GM12878 (cell line): ENCODE measurements at regions of chr10 and their contacts with region 1.

Region 1: DNA sequence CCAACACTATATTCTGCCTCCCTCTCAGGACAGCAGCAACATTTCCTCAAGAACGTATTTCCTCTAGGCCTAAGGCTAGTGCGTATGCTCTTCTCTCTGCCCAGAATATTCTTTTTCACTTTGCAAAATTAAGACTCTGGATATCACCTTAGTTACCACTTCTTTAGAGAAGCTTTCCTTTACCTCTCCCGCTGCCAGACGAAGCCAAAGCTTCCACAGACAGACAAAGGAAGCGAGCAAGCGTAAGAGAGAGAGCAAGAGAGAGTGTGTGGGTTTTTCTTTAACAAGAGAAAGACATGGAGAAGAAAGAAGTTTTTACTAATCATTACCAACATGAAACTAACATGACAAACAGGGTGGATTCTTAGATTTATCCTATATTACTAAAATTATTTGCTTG is 64.1 kb downstream of the P4HA1 start:
- DNase-seq: no peak
- ATAC-seq: no peak
- H3K4me3 ChIP-seq: no peak overlapping the region
- H3K27ac ChIP-seq: no peak overlapping the region
- H3K4me1 ChIP-seq: no peaks in the 10 kb centered on the region
- H3K27me3 ChIP-seq: no peaks in the 10 kb centered on the region
- CTCF ChIP-seq: no peak
- EP300 ChIP-seq: no peak
- POLR2A ChIP-seq: no peak
- RAD21 ChIP-seq: no peak

Region 2: GRCh38 chr10:72753760-72754231 is 278.7 kb before region 1 on chr10:
- CTCF ChIA-PET with region 1: no interaction called
- POLR2A ChIA-PET with region 1: no interaction called
- RAD21 ChIA-PET with region 1: no interaction called
- SMC1A ChIA-PET with region 1: no interaction called
- in situ Hi-C with region 1: no loop called
- intact Hi-C with region 1: no loop called
- DNase-seq: no peak
- ATAC-seq: no peak; the same call in 2 of the 3 replicates
- H3K4me3 ChIP-seq: no peak overlapping the region
- H3K27ac ChIP-seq: no peak overlapping the region
- H3K4me1 ChIP-seq: peaks cover 4% of the 10 kb centered on the region
- H3K27me3 ChIP-seq: no peaks in the 10 kb centered on the region
- CTCF ChIP-seq: no peak
- EP300 ChIP-seq: no peak
- POLR2A ChIP-seq: no peak
- RAD21 ChIP-seq: no peak

Region 3: DNA sequence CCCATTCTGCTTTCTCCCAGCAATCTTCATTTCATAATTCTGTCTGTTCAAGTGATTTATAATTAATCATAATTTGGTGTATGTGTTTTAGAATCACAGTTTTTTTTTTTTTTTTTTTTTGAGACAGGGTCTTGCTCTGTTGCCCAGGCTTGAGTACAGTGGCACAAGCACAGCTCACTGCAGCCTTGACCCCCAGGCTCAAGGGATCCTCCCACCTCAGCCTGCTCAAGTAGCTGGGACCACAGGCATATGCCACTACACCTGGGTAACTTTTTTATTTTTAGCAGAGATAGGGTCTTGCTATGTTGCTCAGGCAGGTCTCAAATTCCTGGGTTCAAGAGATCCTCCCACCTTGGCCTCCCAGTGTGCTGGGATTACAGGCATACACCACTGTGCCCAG is 28.7 kb before region 1 on chr10:
- CTCF ChIA-PET with region 1: no interaction called
- POLR2A ChIA-PET with region 1: no interaction called
- RAD21 ChIA-PET with region 1: no interaction called
- SMC1A ChIA-PET with region 1: no interaction called
- in situ Hi-C with region 1: no loop called
- intact Hi-C with region 1: no loop called
- DNase-seq: no peak
- ATAC-seq: no peak
- H3K4me3 ChIP-seq: no peak overlapping the region
- H3K27ac ChIP-seq: no peak overlapping the region
- H3K4me1 ChIP-seq: no peaks in the 10 kb centered on the region
- H3K27me3 ChIP-seq: no peaks in the 10 kb centered on the region
- CTCF ChIP-seq: no peak
- EP300 ChIP-seq: no peak
- POLR2A ChIP-seq: no peak
- RAD21 ChIP-seq: no peak

Region 4: GRCh38 chr10:73021050-73021449 is 11.5 kb before region 1 on chr10:
- CTCF ChIA-PET with region 1: no interaction called
- POLR2A ChIA-PET with region 1: no interaction called
- RAD21 ChIA-PET with region 1: no interaction called
- SMC1A ChIA-PET with region 1: no interaction called
- in situ Hi-C with region 1: no loop called
- intact Hi-C with region 1: no loop called
- DNase-seq: no peak
- ATAC-seq: no peak
- H3K4me3 ChIP-seq: no peak overlapping the region
- H3K27ac ChIP-seq: no peak overlapping the region
- H3K4me1 ChIP-seq: no peaks in the 10 kb centered on the region
- H3K27me3 ChIP-seq: no peaks in the 10 kb centered on the region
- CTCF ChIP-seq: no peak
- EP300 ChIP-seq: no peak
- POLR2A ChIP-seq: no peak
- RAD21 ChIP-seq: no peak

Region 5: DNA sequence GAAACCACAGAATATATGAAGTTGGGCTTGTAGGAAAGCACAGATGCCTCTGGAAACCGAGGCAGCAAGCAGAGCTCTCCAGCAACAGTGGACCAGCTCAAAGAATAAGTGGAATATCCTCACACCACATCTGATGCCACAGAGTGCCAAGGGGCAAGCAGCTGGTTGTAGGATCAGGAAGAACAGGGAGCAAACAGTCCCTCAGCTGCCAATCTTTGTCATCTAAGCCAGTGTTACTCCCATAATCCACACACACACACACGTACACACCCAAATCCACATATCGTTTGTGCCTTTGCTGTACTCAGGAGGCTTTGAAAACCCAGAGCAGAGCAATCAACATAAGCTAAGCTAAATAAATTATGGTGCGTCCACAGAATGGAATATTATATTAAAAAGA is 691.0 kb after region 1 on chr10:
- CTCF ChIA-PET with region 1: no interaction called
- POLR2A ChIA-PET with region 1: interaction called, 12 read pairs
- RAD21 ChIA-PET with region 1: no interaction called
- SMC1A ChIA-PET with region 1: no interaction called
- in situ Hi-C with region 1: no loop called
- intact Hi-C with region 1: no loop called
- DNase-seq: no peak
- ATAC-seq: no peak
- H3K4me3 ChIP-seq: no peak overlapping the region
- H3K27ac ChIP-seq: no peak overlapping the region
- H3K4me1 ChIP-seq: no peaks in the 10 kb centered on the region
- H3K27me3 ChIP-seq: no peaks in the 10 kb centered on the region
- CTCF ChIP-seq: no peak
- EP300 ChIP-seq: no peak
- POLR2A ChIP-seq: no peak
- RAD21 ChIP-seq: no peak